ENCODE measurements at regions of chr4 and their contacts with region 1.

Region 1: GRCh38 chr4:26076000-26076587 is 162.1 kb downstream of the SMIM20 start:
- DNase-seq: no peak
- H3K4me3 ChIP-seq: no peak overlapping the region
- H3K4me1 ChIP-seq: peaks cover 18% of the 10 kb centered on the region
- H3K27me3 ChIP-seq: peaks cover 8% of the 10 kb centered on the region

Region 2: DNA sequence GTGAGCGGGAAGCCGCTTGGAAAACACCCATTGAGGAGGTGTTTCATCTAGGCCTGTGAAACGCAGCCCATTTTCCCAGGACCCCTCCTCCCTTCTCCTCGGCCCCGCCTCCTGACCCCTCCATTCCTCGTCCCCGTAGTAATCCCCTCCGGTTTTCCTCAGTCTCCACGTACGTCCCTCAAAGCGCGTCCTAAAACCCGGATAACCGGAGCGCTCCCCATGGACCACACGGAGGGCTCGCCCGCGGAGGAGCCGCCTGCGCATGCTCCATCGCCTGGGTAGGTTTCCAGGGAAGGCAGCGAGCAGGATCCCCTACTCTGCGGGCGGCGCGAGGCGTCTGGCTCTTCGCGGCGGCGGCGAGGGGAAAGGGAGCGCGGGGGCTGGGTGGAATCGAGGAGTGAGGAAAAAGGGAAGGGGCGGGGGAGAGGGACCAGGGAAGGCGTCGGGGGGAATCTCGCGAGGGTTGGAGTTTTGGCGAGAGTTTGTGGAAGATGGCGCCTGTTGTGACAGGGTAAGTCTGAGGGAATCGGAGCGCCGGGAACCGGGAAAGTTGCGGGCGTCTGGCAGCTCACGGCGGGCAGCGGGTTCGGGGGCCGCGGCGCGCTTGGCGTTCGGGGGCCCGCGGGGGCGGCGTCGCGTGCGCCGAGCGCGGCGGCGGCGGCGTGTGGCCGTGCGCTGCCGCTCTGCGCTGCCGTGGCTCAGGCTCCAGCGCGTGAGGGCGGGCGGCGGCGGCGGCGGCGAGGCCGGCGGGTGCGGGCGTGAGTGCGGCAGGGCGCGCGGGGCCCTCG is 244.6 kb after region 1 on chr4 and contains the start of gene RBPJ:
- in situ Hi-C with region 1: loop called (anchors 10 kb)
- DNase-seq: peak; percentile 96 to 97
- H3K4me3 ChIP-seq: peak within 1 kb of the TSS; percentile 95
- H3K4me1 ChIP-seq: peaks cover 18% of the 10 kb centered on the region
- H3K27me3 ChIP-seq: no peaks in the 10 kb centered on the region

Region 3: DNA sequence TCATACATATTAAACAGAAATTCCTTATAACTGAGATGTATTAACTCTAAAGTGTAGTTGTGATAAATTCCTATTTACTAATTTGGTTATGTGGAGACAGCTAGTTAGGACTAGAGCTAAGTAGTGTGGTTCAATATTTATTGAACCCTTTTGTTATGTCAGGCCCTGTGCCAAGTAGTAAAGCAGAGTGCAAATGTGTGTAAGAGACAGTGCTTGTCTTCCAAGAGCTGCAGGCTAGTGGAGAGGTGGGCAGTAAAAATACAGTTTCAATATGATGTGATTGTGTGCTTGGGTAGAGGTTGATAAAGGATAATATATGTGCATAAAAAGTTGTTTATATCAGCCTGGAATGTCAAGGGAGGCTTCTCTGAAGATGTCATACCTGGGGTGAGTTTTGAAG is 587.8 kb after region 1 on chr4:
- in situ Hi-C with region 1: no loop called
- DNase-seq: no peak
- H3K4me3 ChIP-seq: no peak overlapping the region
- H3K4me1 ChIP-seq: peaks cover 7% of the 10 kb centered on the region
- H3K27me3 ChIP-seq: no peaks in the 10 kb centered on the region